OCI-LY7 (cell line): ENCODE measurements at regions of chr1 and their contacts with region 1.

Region 1: DNA sequence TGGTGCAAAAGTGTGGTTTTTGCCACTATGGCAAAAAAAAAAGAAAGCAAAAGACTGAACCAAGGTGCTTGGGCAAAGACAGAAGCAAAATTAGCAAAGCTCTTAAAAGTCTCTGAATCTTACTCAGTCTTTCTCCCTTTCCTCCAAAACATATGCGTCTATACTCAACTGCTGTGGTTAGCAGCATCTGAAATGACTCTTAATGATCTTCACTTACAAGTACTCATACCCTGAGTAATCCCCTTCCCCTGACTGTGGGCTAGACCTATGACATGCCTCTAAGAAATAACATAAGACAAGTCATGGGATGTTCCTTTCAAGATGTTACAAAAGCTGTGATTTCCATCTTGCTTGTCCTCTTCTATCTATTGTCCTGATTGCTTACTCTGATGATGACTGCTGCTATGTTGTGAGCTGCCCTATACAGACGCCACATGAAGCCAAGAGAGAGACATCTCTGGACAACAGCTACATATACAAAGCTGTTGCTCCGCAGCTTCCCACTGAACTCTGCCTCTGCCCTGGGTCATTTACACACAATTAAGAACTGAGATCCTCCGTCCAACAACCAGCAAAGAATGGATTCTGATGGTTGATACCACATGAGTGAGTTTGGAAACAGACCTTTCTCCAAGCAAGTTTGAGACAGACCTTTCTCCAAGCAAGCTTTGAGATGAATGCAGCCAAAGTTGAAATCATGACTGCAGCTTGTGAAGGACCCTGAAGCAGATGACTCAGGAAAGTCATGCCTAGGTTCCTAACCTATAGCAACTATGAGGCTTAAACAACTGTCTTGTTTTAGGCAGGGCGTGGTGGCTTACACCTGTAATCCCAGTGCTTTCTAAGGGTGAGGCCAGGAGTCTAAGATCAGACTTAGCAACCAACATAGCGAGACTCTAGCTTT is 55.2 kb downstream of the PUM1 start:
- DNase-seq: no peak
- H3K4me3 ChIP-seq: no peak overlapping the region
- H3K27ac ChIP-seq: no peak overlapping the region
- H3K4me1 ChIP-seq: peaks cover 21% of the 10 kb centered on the region
- CTCF ChIP-seq: no peak

Region 2: GRCh38 chr1:30405081-30405480 is 605.3 kb before region 1 on chr1:
- CTCF ChIA-PET with region 1: no interaction called
- POLR2A ChIA-PET with region 1: no interaction called
- intact Hi-C with region 1: no loop called
- DNase-seq: no peak
- H3K4me3 ChIP-seq: no peak overlapping the region
- H3K27ac ChIP-seq: no peak overlapping the region
- H3K4me1 ChIP-seq: no peaks in the 10 kb centered on the region
- CTCF ChIP-seq: no peak

Region 3: GRCh38 chr1:30902182-30902581 is 108.2 kb before region 1 on chr1:
- CTCF ChIA-PET with region 1: no interaction called
- POLR2A ChIA-PET with region 1: no interaction called
- intact Hi-C with region 1: no loop called
- DNase-seq: no peak
- H3K4me3 ChIP-seq: no peak overlapping the region
- H3K27ac ChIP-seq: no peak overlapping the region
- H3K4me1 ChIP-seq: no peaks in the 10 kb centered on the region
- CTCF ChIP-seq: no peak

Region 4: DNA sequence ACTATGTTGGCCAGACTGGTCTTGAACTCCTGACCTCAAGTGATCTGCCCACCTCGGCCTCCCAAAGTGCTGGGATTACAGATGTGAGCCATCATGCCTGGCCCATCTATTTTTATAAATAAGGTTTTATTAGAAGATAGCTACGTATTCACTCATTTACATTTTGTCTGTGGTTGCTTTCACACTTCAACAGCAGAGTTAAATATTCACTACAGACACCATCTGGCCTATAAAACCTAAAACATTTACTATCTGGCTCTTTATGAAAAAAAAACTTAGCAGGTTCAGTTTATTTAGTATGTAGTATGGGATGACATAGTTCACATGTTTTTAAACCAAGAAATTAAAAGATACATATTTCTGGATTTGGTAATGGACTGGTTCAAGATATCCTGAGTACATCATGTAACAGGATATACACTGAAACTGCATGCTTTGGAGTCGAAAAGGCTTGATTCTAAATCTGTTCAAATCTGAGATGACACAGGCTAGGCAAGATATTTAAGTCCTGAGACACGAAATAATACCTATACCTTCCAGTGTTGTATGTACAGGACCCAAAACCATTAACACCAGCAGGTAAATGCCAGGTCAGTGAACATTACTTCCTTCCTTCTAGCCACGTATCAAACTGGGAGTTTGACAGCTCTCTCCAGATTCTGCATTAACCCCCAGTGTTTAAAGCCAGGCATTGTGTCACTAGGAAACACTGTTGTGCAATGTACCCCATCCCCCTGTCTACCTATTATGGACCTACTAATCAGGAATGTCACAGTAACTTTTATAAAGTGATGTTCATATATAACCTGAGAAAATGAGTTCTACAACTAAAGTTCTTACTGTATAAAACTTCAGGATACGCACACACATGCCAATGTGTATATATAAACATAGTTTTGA is 47.5 kb before region 1 on chr1:
- CTCF ChIA-PET with region 1: no interaction called
- POLR2A ChIA-PET with region 1: no interaction called
- intact Hi-C with region 1: loop called (anchors 5 kb)
- DNase-seq: no peak
- H3K4me3 ChIP-seq: no peak overlapping the region
- H3K27ac ChIP-seq: no peak overlapping the region
- H3K4me1 ChIP-seq: no peaks in the 10 kb centered on the region
- CTCF ChIP-seq: no peak

Region 5: GRCh38 chr1:31027693-31028526 is 17.6 kb after region 1 on chr1:
- CTCF ChIA-PET with region 1: no interaction called
- POLR2A ChIA-PET with region 1: interaction called, 10 read pairs
- intact Hi-C with region 1: no loop called
- DNase-seq: peak; percentile 62
- H3K4me3 ChIP-seq: peak overlapping the region; percentile 47
- H3K27ac ChIP-seq: peak overlapping the region; percentile 62
- H3K4me1 ChIP-seq: peaks cover 45% of the 10 kb centered on the region
- CTCF ChIP-seq: no peak

Region 6: GRCh38 chr1:31038360-31038759 is 28.0 kb after region 1 on chr1:
- CTCF ChIA-PET with region 1: no interaction called
- POLR2A ChIA-PET with region 1: no interaction called
- intact Hi-C with region 1: no loop called
- DNase-seq: no peak
- H3K4me3 ChIP-seq: no peak overlapping the region
- H3K27ac ChIP-seq: no peak overlapping the region
- H3K4me1 ChIP-seq: peaks cover 6% of the 10 kb centered on the region
- CTCF ChIP-seq: no peak